WTC11 (cell line): ENCODE measurements at regions of chr22 and their contacts with region 1.

Region 1: DNA sequence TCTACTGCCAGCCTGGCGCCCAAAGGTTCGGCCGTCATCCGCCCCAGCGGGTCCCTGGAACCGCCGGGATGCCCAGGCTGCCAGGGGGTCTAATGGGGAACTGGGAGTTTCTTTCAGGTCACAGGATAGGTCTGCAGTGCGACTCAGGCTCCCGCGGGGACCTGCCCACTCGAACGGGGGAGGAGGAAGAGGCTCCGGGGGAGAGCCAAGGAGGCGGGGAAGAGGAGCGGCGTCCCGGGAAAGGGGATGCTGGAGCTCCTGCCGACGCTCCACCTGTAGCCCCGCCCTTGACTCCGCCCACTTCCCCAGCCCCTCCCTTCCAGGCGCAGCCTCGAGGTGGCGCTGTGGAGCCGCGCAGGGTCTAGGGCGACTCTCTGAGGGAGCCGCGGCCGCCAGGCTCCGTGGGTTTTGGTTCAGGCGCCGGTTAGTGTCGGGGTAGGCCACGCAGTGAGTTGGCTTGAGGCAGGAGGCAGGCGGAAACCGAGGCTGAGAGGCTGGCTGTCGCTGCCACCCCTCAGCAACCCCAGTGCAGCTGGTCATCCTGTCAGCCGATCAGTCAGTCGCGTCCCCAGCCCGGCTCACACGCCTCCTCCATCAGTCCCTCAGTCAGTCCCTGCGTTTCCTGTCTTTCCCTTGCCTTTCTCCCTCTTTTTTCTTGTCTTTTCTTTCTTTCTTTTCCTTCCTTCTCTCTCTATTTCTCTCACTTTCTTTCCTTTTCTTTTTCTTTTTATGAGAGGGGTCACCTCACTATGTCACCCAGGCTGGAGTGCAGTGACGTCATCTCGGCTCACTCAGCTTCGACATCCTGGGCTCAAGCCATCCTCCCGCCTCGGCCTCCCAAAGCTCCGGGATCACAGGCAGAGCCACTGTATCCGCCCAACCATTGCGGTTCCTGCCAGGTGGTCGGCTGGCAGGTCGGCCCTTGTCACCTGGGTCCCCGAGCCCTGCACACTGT is 26.4 kb downstream of the YWHAH start:
- DNase-seq: peak; percentile 93
- ATAC-seq: peak; percentile 92
- H3K4me3 Mint-ChIP-seq: peak overlapping the region; percentile 91
- H3K27ac Mint-ChIP-seq: no peak overlapping the region
- H3K4me1 Mint-ChIP-seq: peaks cover 3% of the 10 kb centered on the region; the same call in 1 of the 2 replicates
- H3K27me3 Mint-ChIP-seq: peaks cover 6% of the 10 kb centered on the region; the same call in 1 of the 2 replicates
- CTCF ChIP-seq: peak; percentile 98

Region 2: GRCh38 chr22:31343235-31344191 is 627.3 kb before region 1 on chr22:
- CTCF ChIA-PET with region 1: no interaction called
- POLR2A ChIA-PET with region 1: no interaction called
- DNase-seq: peak; percentile 76
- ATAC-seq: peak; percentile 13
- H3K4me3 Mint-ChIP-seq: peak overlapping the region; percentile 80
- H3K27ac Mint-ChIP-seq: peak overlapping the region; percentile 95
- H3K4me1 Mint-ChIP-seq: peaks cover 59% of the 10 kb centered on the region
- H3K27me3 Mint-ChIP-seq: no peaks in the 10 kb centered on the region
- CTCF ChIP-seq: no peak

Region 3: DNA sequence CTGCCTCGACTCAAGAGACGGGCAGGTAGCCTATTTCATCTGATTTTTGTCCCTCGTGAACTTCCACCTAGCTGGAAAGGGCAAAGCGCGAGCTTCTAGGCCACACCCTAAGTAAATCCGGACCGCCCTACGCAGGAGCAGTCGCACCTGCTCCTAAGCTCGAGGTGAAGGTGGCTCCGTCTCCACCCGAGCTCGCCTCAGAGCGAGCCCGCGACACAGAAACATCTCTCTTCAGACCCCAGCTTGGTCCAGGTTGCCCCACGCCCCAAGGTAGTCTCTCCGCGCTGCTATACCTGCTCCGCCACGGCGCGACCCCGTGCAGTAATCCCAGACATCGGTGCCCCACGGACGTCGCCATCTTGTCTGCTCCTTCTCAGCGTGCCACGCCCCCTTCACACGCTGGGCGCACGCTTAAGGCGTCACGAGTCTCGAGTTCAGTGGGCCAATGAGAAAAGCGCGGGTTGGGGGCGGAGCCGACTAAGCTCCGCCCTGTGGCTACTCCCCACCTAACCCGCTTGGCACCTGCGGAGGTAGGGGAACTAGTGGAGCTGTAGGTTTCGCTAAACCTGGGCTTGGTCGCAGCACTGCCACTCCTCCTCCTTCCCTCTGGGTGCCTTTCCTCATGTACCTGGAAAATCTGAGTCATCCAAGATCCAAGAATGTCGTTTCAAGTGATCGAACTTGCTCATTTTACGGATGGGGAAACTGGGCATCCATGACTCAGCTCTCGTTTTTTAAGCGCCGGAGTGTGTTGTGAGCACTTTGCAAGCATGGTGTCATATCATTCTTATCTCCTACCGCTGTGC is 308.7 kb before region 1 on chr22 and contains the start of gene PISD:
- CTCF ChIA-PET with region 1: interaction called, 46 read pairs
- POLR2A ChIA-PET with region 1: interaction called, 9 read pairs
- DNase-seq: peak; percentile 98
- ATAC-seq: peak; percentile 96
- H3K4me3 Mint-ChIP-seq: peak within 1 kb of the TSS; percentile 99
- H3K27ac Mint-ChIP-seq: peak within 1 kb of the TSS; percentile 99
- H3K4me1 Mint-ChIP-seq: peaks cover 12% of the 10 kb centered on the region
- H3K27me3 Mint-ChIP-seq: peaks cover 3% of the 10 kb centered on the region; the same call in 1 of the 2 replicates
- CTCF ChIP-seq: no peak
- total RNA-seq, gene PISD: 49.4 to 55.7 TPM (median 50.3 TPM) in 3 replicates

Region 4: DNA sequence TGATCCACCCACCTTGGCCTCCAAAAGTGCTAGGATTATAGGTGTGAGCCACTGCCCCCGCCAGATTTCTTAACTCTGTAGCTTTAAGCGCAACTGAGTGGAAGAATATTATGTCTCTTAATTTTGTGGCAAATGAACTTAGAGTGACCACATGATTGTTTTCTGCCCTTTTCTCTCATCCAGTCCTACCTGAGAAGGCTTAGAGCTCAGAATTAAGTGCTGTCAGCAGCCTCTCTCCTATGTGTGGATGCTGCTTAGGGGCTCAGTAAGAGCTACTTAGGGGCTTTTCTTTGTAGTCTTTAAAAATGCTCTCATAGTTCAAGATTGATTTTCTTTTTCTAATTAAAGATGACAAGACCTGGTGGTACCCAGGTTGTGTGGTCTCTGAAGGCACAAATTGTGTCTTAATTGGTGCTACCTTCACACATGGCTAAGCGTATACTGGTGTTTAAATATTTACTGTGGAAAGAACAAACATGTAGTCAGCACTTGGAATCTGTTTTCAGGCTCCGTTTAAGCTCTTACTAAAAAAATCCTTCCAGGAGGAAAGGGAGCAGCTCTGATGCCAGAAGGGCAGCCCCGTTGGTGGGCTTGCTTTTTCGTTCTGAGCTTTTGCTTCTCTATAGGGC is 157.7 kb before region 1 on chr22:
- CTCF ChIA-PET with region 1: interaction called, 19 read pairs
- POLR2A ChIA-PET with region 1: no interaction called
- DNase-seq: no peak
- ATAC-seq: no peak
- H3K4me3 Mint-ChIP-seq: no peak overlapping the region
- H3K27ac Mint-ChIP-seq: no peak overlapping the region
- H3K4me1 Mint-ChIP-seq: no peaks in the 10 kb centered on the region
- H3K27me3 Mint-ChIP-seq: no peaks in the 10 kb centered on the region
- CTCF ChIP-seq: no peak

Region 5: GRCh38 chr22:31872209-31872608 is 98.6 kb before region 1 on chr22:
- CTCF ChIA-PET with region 1: interaction called, 42 read pairs
- POLR2A ChIA-PET with region 1: no interaction called
- DNase-seq: peak; percentile 43
- ATAC-seq: peak; percentile 77
- H3K4me3 Mint-ChIP-seq: no peak overlapping the region
- H3K27ac Mint-ChIP-seq: no peak overlapping the region
- H3K4me1 Mint-ChIP-seq: peaks cover 23% of the 10 kb centered on the region
- H3K27me3 Mint-ChIP-seq: no peaks in the 10 kb centered on the region
- CTCF ChIP-seq: no peak

Region 6: GRCh38 chr22:31943976-31944699 is 26.6 kb before region 1 on chr22 and contains the start of gene YWHAH:
- CTCF ChIA-PET with region 1: interaction called, 35 read pairs
- POLR2A ChIA-PET with region 1: interaction called, 3 read pairs
- DNase-seq: peak; percentile 93
- ATAC-seq: peak; percentile 77
- H3K4me3 Mint-ChIP-seq: peak within 1 kb of the TSS; percentile 76
- H3K27ac Mint-ChIP-seq: peak within 1 kb of the TSS; percentile 92
- H3K4me1 Mint-ChIP-seq: peaks cover 10% of the 10 kb centered on the region
- H3K27me3 Mint-ChIP-seq: peaks cover 10% of the 10 kb centered on the region
- CTCF ChIP-seq: no peak
- total RNA-seq, gene YWHAH: 190 to 205 TPM (median 203 TPM) in 3 replicates

Region 7: GRCh38 chr22:32050678-32051515 is 80.1 kb after region 1 on chr22:
- CTCF ChIA-PET with region 1: interaction called, 18 read pairs
- POLR2A ChIA-PET with region 1: no interaction called
- DNase-seq: no peak
- ATAC-seq: peak; percentile 64
- H3K4me3 Mint-ChIP-seq: no peak overlapping the region
- H3K27ac Mint-ChIP-seq: peak overlapping the region; percentile 48; the same call in 1 of the 2 replicates
- H3K4me1 Mint-ChIP-seq: peaks cover 20% of the 10 kb centered on the region
- H3K27me3 Mint-ChIP-seq: peaks cover 15% of the 10 kb centered on the region
- CTCF ChIP-seq: no peak

Region 8: DNA sequence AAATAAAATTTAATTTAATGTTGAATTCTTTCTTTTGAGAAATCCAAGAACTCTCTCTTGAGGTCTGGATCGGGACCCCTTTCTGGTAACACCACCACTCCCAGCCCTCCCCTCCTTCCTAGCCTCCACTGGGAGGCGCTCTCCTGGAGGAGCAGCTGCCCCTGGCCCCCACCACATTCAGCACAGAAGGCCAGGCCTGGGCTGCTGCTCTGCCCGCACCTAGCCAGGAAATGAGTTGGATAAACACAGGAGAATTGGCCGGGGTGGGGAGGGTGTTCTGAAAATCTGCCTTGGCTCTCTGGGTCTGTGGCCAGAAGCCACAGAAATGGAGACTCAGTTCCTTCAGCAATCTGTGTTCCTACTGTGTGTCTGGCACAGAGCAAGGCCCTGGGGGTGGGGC is 157.1 kb after region 1 on chr22:
- CTCF ChIA-PET with region 1: interaction called, 13 read pairs
- POLR2A ChIA-PET with region 1: no interaction called
- DNase-seq: peak; percentile 74
- ATAC-seq: peak; percentile 91
- H3K4me3 Mint-ChIP-seq: no peak overlapping the region
- H3K27ac Mint-ChIP-seq: no peak overlapping the region
- H3K4me1 Mint-ChIP-seq: peaks cover 11% of the 10 kb centered on the region
- H3K27me3 Mint-ChIP-seq: no peaks in the 10 kb centered on the region
- CTCF ChIP-seq: peak; percentile 43; the same call in 1 of the 2 replicates